Activated T-helper 2 cell treated with anti-CD3 and anti-CD28 coated beads, Interferon-gamma antibody, Interleukin-2, Interleukin-4, amounts not matched to agents 10 μg/mL and 5 μg/mL and 100 μg/mL, durations not matched to agents 14 hours and 24 hours and 36 hours (primary cell): ENCODE measurements at regions of chr19 and their contacts with region 1.

Region 1: GRCh38 chr19:50357178-50358100 is 8.0 kb downstream of the NAPSA start:
- DNase-seq: peak; percentile 83
- H3K4me3 Mint-ChIP-seq: peak overlapping the region; percentile 89
- H3K27ac Mint-ChIP-seq: peak overlapping the region; percentile 99
- H3K4me1 Mint-ChIP-seq: peaks cover 42% of the 10 kb centered on the region
- H3K27me3 Mint-ChIP-seq: no peaks in the 10 kb centered on the region

Region 2: GRCh38 chr19:50311723-50312635 is 45.5 kb before region 1 on chr19:
- intact Hi-C with region 1: no loop called
- DNase-seq: no peak
- H3K4me3 Mint-ChIP-seq: no peak overlapping the region
- H3K27ac Mint-ChIP-seq: no peak overlapping the region
- H3K4me1 Mint-ChIP-seq: peaks cover 9% of the 10 kb centered on the region
- H3K27me3 Mint-ChIP-seq: peaks cover 57% of the 10 kb centered on the region

Region 3: GRCh38 chr19:50329146-50329925 is 28.1 kb before region 1 on chr19 and contains the start of gene KCNC3:
- intact Hi-C with region 1: loop called (anchors 2 kb)
- DNase-seq: peak; percentile 97
- H3K4me3 Mint-ChIP-seq: peak within 1 kb of the TSS; percentile 91
- H3K27ac Mint-ChIP-seq: peak within 1 kb of the TSS; percentile 95
- H3K4me1 Mint-ChIP-seq: peaks cover 59% of the 10 kb centered on the region
- H3K27me3 Mint-ChIP-seq: peaks cover 15% of the 10 kb centered on the region
- total RNA-seq, gene KCNC3: 17.6 and 19.2 TPM in 2 replicates

Region 4: GRCh38 chr19:50341091-50341564 is 16.3 kb before region 1 on chr19:
- intact Hi-C with region 1: no loop called
- DNase-seq: no peak
- H3K4me3 Mint-ChIP-seq: no peak overlapping the region
- H3K27ac Mint-ChIP-seq: no peak overlapping the region
- H3K4me1 Mint-ChIP-seq: peaks cover 8% of the 10 kb centered on the region
- H3K27me3 Mint-ChIP-seq: no peaks in the 10 kb centered on the region

Region 5: DNA sequence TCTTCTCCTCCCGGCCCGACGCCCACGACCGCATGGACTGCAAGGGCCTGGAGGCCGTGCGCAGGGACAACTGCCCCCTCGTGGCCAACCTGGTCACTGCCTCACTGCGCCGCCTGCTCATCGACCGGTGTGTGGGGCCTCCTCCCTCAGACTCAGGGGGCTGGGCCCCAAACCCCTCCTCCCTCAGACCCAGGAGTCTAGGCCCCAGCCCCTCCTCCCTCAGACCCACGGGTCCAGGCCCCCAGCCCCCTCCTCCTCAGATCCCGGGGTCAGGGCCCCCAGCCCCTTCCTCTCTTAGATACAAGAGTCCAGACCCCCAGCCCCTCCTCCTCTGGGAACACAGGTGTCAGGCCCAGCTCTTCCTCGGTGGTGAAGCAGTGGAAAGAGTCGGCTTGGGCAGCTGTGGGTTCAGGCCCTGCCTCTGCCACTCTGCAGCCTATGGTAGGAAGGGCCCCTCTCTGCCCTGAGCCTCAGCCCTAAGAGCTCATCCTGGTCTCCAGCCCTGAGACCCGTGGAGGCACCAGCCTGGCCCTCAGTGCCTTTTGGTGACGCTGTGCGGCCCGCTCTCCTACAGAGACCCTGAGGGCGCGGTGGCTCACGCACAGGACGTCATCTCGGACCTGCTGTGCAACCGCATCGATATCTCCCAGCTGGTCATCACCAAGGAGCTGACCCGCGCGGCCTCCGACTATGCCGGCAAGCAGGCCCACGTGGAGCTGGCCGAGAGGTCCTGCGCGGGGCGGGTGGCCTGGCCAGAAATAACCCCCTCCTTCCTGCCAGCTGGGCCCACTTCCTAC is 57.6 kb after region 1 on chr19:
- intact Hi-C with region 1: loop called (anchors 1 kb)
- DNase-seq: peak; percentile 60
- H3K4me3 Mint-ChIP-seq: no peak overlapping the region
- H3K27ac Mint-ChIP-seq: peak overlapping the region; percentile 62
- H3K4me1 Mint-ChIP-seq: peaks cover 7% of the 10 kb centered on the region
- H3K27me3 Mint-ChIP-seq: peaks cover 7% of the 10 kb centered on the region

Region 6: DNA sequence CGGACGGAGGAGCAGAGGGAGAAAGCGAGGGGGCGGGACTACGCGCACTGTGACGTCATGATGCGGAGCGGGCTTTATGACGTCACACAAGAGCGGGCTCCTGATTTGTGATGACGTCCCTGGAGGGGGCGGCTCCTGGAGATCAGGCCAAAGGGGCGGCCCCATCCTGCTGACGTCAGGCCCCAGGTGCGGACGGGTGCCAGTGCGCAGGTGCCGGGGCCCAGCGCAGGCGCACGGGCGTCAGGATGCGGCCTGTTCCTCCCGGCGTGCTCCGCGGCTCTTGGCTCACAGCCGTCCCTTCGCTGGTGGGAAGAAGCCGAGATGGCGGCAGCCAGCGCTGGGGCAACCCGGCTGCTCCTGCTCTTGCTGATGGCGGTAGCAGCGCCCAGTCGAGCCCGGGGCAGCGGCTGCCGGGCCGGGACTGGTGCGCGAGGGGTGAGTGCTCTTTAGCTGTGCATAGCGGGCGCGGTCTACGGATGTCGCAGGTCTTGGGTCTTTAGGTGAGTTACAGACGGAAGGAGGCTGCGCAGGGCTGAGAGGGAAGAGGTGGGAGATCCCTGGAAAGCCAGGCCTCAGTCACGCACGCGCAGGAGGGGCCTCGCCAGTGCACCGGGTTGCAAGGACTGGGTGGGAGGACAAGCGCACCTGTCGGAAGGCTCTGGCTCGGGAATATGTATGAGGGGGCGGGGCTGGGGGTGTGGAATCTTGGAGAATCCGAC is 118.9 kb after region 1 on chr19 and contains the starts of genes EMC10 and GARIN5A:
- intact Hi-C with region 1: loop called (anchors 1 kb)
- DNase-seq: peak; percentile 92
- H3K4me3 Mint-ChIP-seq: peak within 1 kb of the TSS; percentile 99
- H3K27ac Mint-ChIP-seq: peak within 1 kb of the TSS; percentile 77
- H3K4me1 Mint-ChIP-seq: peaks cover 10% of the 10 kb centered on the region
- H3K27me3 Mint-ChIP-seq: no peaks in the 10 kb centered on the region
- total RNA-seq, gene EMC10: 76.0 and 76.2 TPM in 2 replicates
- total RNA-seq, gene GARIN5A: 0.28 and 0.82 TPM in 2 replicates

Region 7: GRCh38 chr19:50777754-50778303 is 420.4 kb after region 1 on chr19:
- intact Hi-C with region 1: loop called (anchors 5 kb)
- DNase-seq: no peak
- H3K4me3 Mint-ChIP-seq: no peak overlapping the region
- H3K27ac Mint-ChIP-seq: no peak overlapping the region
- H3K4me1 Mint-ChIP-seq: peaks cover 9% of the 10 kb centered on the region
- H3K27me3 Mint-ChIP-seq: peaks cover 48% of the 10 kb centered on the region